ENCODE measurements at regions of chr2 and their contacts with region 1.

Region 1: GRCh38 chr2:195664528-195664927 is 7.5 kb downstream of the SLC39A10 start:
- DNase-seq: no peak
- ATAC-seq: no peak
- H3K4me3 Mint-ChIP-seq: no peak overlapping the region
- H3K27ac Mint-ChIP-seq: peak overlapping the region; percentile 66
- H3K4me1 Mint-ChIP-seq: peaks cover 60% of the 10 kb centered on the region
- H3K27me3 Mint-ChIP-seq: no peaks in the 10 kb centered on the region
- CTCF ChIP-seq: no peak

Region 2: GRCh38 chr2:194464964-194465638 is 1199.4 kb before region 1 on chr2:
- CTCF ChIA-PET with region 1: no interaction called
- POLR2A ChIA-PET with region 1: no interaction called
- intact Hi-C with region 1: no loop called
- DNase-seq: no peak
- ATAC-seq: no peak
- H3K4me3 Mint-ChIP-seq: no peak overlapping the region
- H3K27ac Mint-ChIP-seq: no peak overlapping the region
- H3K4me1 Mint-ChIP-seq: no peaks in the 10 kb centered on the region
- H3K27me3 Mint-ChIP-seq: no peaks in the 10 kb centered on the region
- CTCF ChIP-seq: no peak

Region 3: DNA sequence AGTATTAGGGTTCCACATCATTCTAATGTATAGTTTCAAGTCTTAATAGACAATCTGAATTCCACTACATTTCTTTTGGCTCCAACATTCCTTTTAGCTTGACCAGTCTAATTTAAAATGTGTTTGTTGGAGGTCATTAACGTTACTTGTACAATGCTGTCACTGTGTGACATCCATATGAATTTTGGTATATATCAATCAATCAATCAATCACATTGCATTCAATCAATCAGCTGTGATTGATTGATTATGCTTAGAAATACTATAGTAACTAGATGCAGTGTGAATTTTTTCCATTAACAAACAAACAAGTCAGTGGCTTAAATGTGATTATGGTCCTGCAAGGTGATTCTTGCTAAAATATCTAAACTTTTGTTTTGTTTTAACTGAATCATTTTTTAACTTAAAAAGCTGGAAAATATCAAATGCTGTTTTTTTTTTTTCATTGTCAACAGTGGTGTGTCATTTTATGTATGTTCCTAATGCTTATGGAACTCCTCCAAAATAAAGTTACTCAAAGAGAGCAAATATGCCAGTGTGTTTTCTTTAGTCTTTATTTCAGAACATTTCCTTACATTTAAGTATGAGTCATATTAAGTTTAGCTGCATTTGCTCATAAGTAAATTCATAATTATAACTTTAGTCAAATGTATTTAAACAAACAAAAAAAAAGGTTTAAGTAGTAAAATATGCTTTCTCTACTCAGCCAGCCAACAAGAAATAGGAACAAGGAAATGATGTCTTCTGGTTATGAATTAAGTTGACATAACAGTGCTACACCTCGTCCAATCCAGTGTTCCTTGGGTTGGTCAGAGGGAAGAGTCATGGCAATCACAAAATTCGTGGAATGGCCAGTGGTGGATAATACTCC is 72.9 kb after region 1 on chr2:
- CTCF ChIA-PET with region 1: no interaction called
- POLR2A ChIA-PET with region 1: no interaction called
- intact Hi-C with region 1: no loop called
- DNase-seq: no peak
- ATAC-seq: no peak
- H3K4me3 Mint-ChIP-seq: no peak overlapping the region
- H3K27ac Mint-ChIP-seq: no peak overlapping the region
- H3K4me1 Mint-ChIP-seq: peaks cover 2% of the 10 kb centered on the region
- H3K27me3 Mint-ChIP-seq: no peaks in the 10 kb centered on the region
- CTCF ChIP-seq: no peak

Region 4: DNA sequence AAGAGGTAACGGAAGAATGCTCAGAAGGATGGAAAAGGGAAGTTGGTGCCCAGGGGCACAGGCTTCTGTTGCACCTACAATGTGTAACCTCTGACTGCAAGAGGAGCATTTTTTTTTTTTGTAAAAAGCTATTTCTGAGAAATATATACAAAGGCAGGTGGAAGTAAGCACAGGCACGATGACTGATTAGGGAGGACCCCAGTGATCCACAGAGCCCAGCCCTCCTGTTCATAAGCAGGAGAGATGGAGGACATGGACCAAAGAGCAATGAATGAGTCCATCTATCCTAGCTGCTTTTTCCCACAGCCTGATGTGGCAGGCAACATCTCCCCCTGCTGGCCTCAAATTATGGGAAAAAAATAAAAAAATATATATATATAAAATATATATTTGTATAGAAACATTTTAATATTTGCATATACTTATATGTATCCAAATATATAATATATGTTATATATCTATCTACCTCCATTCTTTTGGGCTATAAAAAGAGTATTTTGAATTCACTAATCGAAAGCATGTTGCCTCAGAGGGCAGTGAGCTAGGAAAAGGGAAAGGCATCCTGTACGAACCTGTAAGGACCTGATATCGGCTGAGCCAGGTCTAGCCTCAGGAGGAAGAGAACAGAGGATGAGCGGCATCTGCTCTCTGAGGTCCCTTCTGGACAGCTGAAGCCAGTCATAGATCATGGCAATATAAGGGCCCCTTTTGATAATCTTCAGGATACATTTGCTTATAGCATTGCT is 672.9 kb after region 1 on chr2:
- CTCF ChIA-PET with region 1: interaction called, 3 read pairs
- POLR2A ChIA-PET with region 1: no interaction called
- intact Hi-C with region 1: loop called (anchors 2 kb)
- DNase-seq: no peak
- ATAC-seq: peak; percentile 53
- H3K4me3 Mint-ChIP-seq: no peak overlapping the region
- H3K27ac Mint-ChIP-seq: peak overlapping the region; percentile 5
- H3K4me1 Mint-ChIP-seq: peaks cover 20% of the 10 kb centered on the region
- H3K27me3 Mint-ChIP-seq: no peaks in the 10 kb centered on the region
- CTCF ChIP-seq: no peak

Measured in activated B cell treated with CpG ODN at 0.5 μM for 24 hours (primary cell).